ENCODE measurements at regions of chr19 and their contacts with region 1.

Region 1: GRCh38 chr19:34041925-34042521 is 130.3 kb upstream of the LSM14A start:
- DNase-seq: peak; percentile 91
- ATAC-seq: peak; percentile 72
- H3K4me3 Mint-ChIP-seq: no peak overlapping the region
- H3K27ac Mint-ChIP-seq: no peak overlapping the region
- H3K4me1 Mint-ChIP-seq: no peaks in the 10 kb centered on the region
- H3K27me3 Mint-ChIP-seq: no peaks in the 10 kb centered on the region; the same call in 1 of the 2 replicates
- CTCF ChIP-seq: peak; percentile 93

Region 2: DNA sequence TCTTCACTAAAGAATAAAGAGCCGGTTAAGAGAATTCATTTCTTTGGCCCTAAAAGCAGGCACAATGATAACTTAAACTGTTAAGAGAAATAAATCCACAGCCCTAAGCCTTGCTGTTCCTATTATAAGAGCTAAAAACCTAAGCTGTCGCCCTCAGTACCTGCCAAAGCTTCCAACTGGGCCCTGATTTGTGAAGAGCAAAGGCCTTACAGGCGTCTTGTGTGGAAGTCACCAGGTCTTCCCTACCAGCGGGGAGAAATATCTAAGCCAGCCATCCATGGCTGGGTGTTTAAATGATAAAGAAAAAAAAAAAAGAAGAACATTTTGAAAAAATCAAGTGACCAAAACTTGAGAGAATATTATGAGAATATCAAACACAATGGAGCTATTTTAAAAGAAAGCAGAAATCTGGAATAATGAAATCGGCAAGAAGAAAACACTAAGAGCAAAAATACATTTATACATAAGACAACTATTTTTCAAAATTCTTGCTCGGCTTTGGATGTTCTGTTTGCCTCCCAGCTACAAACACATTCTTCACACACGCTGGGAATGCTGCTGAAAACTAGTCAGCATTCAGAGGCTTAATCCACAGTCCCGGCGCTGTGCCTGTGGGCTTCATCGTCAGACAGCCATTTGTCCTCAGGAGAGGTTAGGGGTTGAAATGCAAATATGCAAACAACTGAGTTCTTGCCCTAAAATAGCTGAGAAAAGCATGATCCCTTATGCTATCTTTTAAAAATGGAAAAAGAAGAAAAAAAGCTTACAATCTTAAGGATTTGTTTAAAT is 40.5 kb after region 1 on chr19:
- CTCF ChIA-PET with region 1: interaction called, 13 read pairs
- POLR2A ChIA-PET with region 1: interaction called, 9 read pairs
- DNase-seq: peak; percentile 38
- ATAC-seq: peak; percentile 78
- H3K4me3 Mint-ChIP-seq: no peak overlapping the region
- H3K27ac Mint-ChIP-seq: peak overlapping the region; percentile 90
- H3K4me1 Mint-ChIP-seq: peaks cover 38% of the 10 kb centered on the region
- H3K27me3 Mint-ChIP-seq: no peaks in the 10 kb centered on the region
- CTCF ChIP-seq: no peak

Region 3: DNA sequence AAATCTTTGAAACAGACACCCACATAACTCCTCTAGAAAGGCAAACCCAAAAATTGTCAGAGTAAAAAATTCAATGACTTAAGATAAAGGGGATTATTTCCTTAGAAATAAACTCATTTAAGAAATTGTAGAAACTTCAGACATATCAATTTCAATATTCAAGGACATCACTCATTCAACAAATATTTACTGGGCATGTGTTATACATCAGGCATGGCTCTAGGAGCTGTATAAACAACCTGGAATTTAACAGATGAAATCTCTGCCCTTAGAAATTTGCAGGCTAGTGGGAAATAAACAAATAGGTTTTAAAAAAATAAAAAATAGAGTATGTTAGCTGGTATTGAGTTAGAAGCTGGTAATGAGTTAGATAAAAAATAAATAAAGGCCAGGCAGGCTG is 46.3 kb after region 1 on chr19:
- CTCF ChIA-PET with region 1: interaction called, 13 read pairs
- POLR2A ChIA-PET with region 1: interaction called, 9 read pairs
- DNase-seq: no peak
- ATAC-seq: no peak
- H3K4me3 Mint-ChIP-seq: no peak overlapping the region
- H3K27ac Mint-ChIP-seq: peak overlapping the region; percentile 10; the same call in 1 of the 2 replicates
- H3K4me1 Mint-ChIP-seq: peaks cover 27% of the 10 kb centered on the region
- H3K27me3 Mint-ChIP-seq: no peaks in the 10 kb centered on the region
- CTCF ChIP-seq: no peak

Region 4: DNA sequence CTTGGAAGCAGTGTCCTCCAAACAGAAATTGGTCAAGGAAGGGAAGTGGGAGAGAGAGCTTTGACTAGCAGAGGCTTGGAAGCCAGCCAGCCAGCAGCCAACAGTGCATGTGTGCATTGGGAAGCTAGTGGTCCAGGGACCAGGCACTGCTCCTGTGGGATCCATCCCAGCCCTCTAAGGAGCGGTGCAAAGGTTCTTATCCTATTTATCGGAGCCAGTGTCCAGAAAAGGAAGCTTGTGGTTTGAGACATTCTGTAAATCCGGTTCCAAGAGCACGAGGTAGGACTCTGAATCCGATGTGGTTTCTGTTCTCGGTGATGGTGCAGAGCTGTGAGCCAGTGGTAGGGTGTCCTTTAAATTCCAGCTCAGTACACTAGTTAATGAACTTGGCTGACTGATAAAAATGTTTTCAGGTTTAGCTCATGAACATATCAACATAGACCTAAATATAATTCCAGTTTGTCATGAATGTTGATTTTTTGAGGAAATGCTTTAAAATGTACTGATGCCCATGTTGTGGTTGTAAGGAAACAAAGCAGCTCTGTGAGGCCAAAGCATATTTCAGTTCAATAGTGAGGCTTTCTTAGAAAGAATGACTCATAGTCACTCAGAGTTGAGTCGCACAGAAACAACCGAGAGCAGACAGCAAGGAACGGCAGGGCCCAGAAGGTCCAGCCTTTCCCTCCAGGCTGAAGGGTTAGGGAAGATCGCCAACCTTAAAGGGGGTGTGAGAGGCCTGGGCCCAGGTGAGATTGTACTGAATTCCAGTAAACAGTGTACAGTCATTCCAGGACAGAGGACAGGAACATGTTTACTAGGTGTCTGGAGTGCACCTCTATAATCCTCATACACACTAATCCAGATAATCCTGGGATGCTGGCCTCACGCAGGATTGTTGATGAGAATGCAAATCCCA is 190.8 kb after region 1 on chr19:
- CTCF ChIA-PET with region 1: no interaction called
- POLR2A ChIA-PET with region 1: no interaction called
- DNase-seq: no peak
- ATAC-seq: no peak
- H3K4me3 Mint-ChIP-seq: no peak overlapping the region
- H3K27ac Mint-ChIP-seq: peak overlapping the region; percentile 74
- H3K4me1 Mint-ChIP-seq: peaks cover 42% of the 10 kb centered on the region
- H3K27me3 Mint-ChIP-seq: no peaks in the 10 kb centered on the region
- CTCF ChIP-seq: no peak

Measured in WTC11 (cell line).